Esophagus squamous epithelium (tissue), 5 donors: ENCODE measurements at regions of chr15 and their contacts with region 1.

Region 1: DNA sequence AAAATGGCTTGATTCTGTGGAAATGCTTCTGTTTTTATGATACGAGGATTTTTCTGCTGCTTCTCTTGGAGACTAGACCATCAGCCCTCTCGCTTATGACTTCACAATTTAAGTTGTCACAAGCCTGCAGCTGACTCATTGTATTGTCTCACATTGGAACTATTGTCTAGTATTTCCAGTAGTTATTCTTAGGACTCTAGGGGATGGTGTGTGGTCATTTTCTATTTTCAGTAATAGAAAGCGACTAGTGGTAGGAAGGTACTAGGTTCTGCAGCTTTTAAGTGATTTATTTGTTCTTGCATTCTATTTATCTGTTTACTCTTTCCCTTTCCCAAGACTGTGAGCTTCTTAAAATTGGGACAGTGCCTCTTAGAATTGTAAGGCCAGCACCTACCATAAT is 66.3 kb upstream of the CRTC3 start:
- DNase-seq: no peak
- H3K4me3 ChIP-seq: no peak overlapping the region
- H3K27ac ChIP-seq: peak overlapping the region; percentile 0 to 77 (median 61)
- H3K4me1 ChIP-seq: peaks cover 0 to 60% (median 9%) of the 10 kb centered on the region in 3 donors
- H3K27me3 ChIP-seq: no peaks in the 10 kb centered on the region
- CTCF ChIP-seq: peak in 1 of 6 experiments; percentile 20
- POLR2A ChIP-seq: no peak

Region 2: GRCh38 chr15:90362936-90363212 is 100.5 kb before region 1 on chr15:
- intact Hi-C with region 1: loop called (anchors 10 kb)
- DNase-seq: no peak
- H3K4me3 ChIP-seq: no peak overlapping the region
- H3K27ac ChIP-seq: peak overlapping the region; percentile 19 to 82 (median 78)
- H3K4me1 ChIP-seq: peaks cover 17 to 46% (median 19%) of the 10 kb centered on the region in 3 donors
- H3K27me3 ChIP-seq: no peaks in the 10 kb centered on the region
- CTCF ChIP-seq: no peak
- POLR2A ChIP-seq: no peak